Common myeloid progenitor, CD34-positive (primary cell): ENCODE measurements at regions of chr17 and their contacts with region 1.

Region 1: DNA sequence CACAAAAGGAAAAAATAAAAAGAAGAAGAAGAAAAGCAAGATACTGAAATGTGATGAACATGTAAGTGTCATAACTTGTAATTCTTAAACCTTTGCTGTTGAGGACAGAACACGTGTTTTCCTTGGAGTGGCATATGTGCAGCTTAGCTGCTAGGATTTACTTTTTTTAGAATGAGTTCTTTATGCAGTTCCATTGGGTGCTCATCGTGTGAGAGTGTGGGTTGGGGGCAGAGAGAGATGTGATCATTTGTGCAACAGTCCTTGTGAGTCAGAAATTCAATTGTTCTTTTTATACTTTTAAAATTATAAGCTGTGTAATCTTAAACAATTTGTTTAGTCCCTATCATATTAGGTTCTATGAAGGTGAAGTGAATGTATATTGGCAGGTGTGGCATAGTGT is 5.5 kb upstream of the DHRS11 start:
- DNase-seq: no peak
- H3K4me3 ChIP-seq: no peak overlapping the region
- H3K27ac ChIP-seq: no peak overlapping the region
- H3K4me1 ChIP-seq: peaks cover 0 to 24% (median 3%) of the 10 kb centered on the region in 4 experiments
- H3K27me3 ChIP-seq: no peaks in the 10 kb centered on the region

Region 2: GRCh38 chr17:36601303-36602029 is 15.3 kb after region 1 on chr17 and contains the start of gene MRM1:
- CTCF ChIA-PET with region 1: interaction called, 11 read pairs
- POLR2A ChIA-PET with region 1: no interaction called
- DNase-seq: peak; percentile 84 to 90 (median 87)
- H3K4me3 ChIP-seq: peak within 1 kb of the TSS; percentile 80 to 97 (median 90)
- H3K27ac ChIP-seq: peak within 1 kb of the TSS; percentile 67 to 82
- H3K4me1 ChIP-seq: peaks cover 8 to 38% (median 30%) of the 10 kb centered on the region in 4 experiments
- H3K27me3 ChIP-seq: no peaks in the 10 kb centered on the region